ENCODE measurements at regions of chr15 and their contacts with region 1.

Region 1: GRCh38 chr15:58247855-58248766 is 109.9 kb downstream of the AQP9 start:
- DNase-seq: peak; percentile 76 to 83
- ATAC-seq: peak; percentile 82 to 95 (median 92)
- H3K4me3 ChIP-seq: no peak overlapping the region
- H3K27ac ChIP-seq: peak overlapping the region; percentile 77 to 96 (median 87)
- H3K4me1 ChIP-seq: peaks cover 7 to 48% (median 25%) of the 10 kb centered on the region in 9 donors
- H3K27me3 ChIP-seq: no peaks in the 10 kb centered on the region
- CTCF ChIP-seq: no peak

Region 2: DNA sequence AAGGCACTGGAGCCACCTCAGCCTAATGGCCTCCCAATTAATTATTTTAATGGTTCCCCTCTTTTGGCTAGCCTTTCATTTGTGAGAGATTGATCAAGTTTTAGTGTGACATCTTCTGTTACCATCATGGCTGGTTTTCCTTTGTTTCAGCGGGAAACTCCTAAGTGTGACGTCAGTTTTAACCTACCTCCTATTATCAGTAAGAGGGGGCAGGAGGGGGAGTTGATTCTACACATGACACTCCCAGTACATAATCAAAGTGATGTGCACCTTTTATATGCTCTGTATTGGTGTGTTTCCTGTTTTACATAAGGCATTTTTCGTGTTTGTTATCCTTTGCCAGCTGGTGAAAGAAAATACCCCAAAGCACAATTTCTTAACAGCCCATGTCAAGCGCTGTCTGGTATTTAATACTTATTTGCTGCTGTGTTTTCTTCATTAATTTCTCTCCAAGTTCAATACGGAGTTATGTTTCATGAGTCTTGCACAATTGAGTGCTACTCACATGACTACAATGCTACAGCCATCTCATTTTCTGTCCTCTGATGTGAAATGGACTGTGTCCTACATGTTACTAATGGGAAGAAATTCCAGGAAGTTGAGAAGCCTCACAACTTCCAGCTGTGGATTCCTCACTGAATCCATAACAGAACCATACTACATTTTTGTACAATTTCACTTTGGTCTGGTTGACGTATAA is 593.8 kb before region 1 on chr15:
- intact Hi-C with region 1: no loop called
- DNase-seq: no peak
- ATAC-seq: peak in 1 of 8 donors; percentile 19
- H3K4me3 ChIP-seq: no peak overlapping the region
- H3K27ac ChIP-seq: peak overlapping the region in 6 of 10 donors; percentile 21 to 70 (median 52)
- H3K4me1 ChIP-seq: peaks cover 5 to 75% (median 23%) of the 10 kb centered on the region in 9 donors
- H3K27me3 ChIP-seq: no peaks in the 10 kb centered on the region
- CTCF ChIP-seq: no peak

Region 3: GRCh38 chr15:58139276-58139988 is 108.7 kb before region 1 on chr15:
- intact Hi-C with region 1: no loop called
- DNase-seq: no peak
- ATAC-seq: peak in 1 of 8 donors; percentile 50
- H3K4me3 ChIP-seq: peak overlapping the region in 1 of 10 donors; percentile 39
- H3K27ac ChIP-seq: peak overlapping the region in 2 of 10 donors; percentile 53 to 90
- H3K4me1 ChIP-seq: peaks cover 0 to 30% (median 0%) of the 10 kb centered on the region in 9 donors
- H3K27me3 ChIP-seq: peaks cover 0 to 9% (median 0%) of the 10 kb centered on the region in 7 donors
- CTCF ChIP-seq: no peak

Region 4: DNA sequence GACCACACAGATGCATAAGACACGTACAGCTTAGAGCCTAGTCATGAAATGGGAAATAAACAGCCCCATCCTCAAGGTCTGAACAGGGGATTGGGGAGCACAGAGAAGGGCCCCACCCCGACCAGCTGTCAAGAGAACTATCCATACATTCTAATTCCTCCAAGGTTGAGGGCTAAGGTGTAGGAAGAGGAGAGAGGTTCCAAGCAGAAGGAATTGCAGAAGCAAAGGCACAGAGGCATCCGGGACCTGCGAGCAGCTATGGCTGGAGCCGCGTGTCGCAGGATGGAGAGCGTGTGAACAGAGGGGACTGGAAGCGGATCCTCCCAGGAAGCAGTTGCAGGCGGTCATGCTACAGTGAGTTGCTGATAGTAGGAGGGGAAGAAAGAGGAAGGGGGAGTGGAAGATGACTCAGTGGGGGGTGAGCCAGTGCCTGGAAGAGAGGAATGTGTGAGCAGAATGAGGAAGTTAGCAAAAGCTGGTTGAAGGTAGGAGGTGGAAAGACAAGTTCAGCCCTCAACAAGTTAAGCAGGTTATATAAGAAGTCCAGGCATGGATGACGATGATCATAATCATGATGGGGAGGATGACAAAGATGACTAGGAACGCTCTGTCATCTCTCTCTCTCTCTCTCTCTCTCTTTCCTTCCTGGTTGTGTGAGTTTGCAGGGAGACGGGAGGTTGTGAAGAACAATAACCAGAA is 273.3 kb after region 1 on chr15:
- intact Hi-C with region 1: loop called in 1 of 10 experiments (anchors 10 kb)
- DNase-seq: peak; percentile 33 to 38
- ATAC-seq: peak in 5 of 8 donors; percentile 5 to 66 (median 52)
- H3K4me3 ChIP-seq: no peak overlapping the region
- H3K27ac ChIP-seq: peak overlapping the region in 7 of 10 donors; percentile 5 to 72 (median 45)
- H3K4me1 ChIP-seq: peaks cover 0 to 96% (median 44%) of the 10 kb centered on the region in 9 donors
- H3K27me3 ChIP-seq: no peaks in the 10 kb centered on the region
- CTCF ChIP-seq: no peak

Measured in heart right ventricle (tissue), 16 donors.